GM23248 (cell line): ENCODE measurements at regions of chrX and their contacts with region 1.

Region 1: GRCh38 chrX:70454441-70455365 is 10.1 kb downstream of the DLG3 start:
- DNase-seq: peak; percentile 50
- H3K4me3 ChIP-seq: peak overlapping the region; percentile 45; the same call in 1 of the 2 replicates
- H3K27ac ChIP-seq: no peak overlapping the region
- H3K4me1 ChIP-seq: no peaks in the 10 kb centered on the region
- H3K27me3 ChIP-seq: no peaks in the 10 kb centered on the region

Region 2: GRCh38 chrX:70279081-70279480 is 175.6 kb before region 1 on chrX:
- in situ Hi-C with region 1: no loop called
- DNase-seq: no peak
- H3K4me3 ChIP-seq: no peak overlapping the region
- H3K27ac ChIP-seq: no peak overlapping the region
- H3K4me1 ChIP-seq: no peaks in the 10 kb centered on the region
- H3K27me3 ChIP-seq: no peaks in the 10 kb centered on the region

Region 3: GRCh38 chrX:70664726-70665125 is 210.0 kb after region 1 on chrX:
- in situ Hi-C with region 1: loop called (anchors 25 kb)
- DNase-seq: peak; percentile 60
- H3K4me3 ChIP-seq: no peak overlapping the region
- H3K27ac ChIP-seq: no peak overlapping the region
- H3K4me1 ChIP-seq: no peaks in the 10 kb centered on the region
- H3K27me3 ChIP-seq: no peaks in the 10 kb centered on the region